ENCODE measurements at regions of chr9 and their contacts with region 1.

Region 1: GRCh38 chr9:128103589-128103962 is 24.0 kb downstream of the PTGES2 start:
- DNase-seq: no peak
- H3K4me3 ChIP-seq: no peak overlapping the region
- CTCF ChIP-seq: no peak

Region 2: GRCh38 chr9:128127990-128128835 is 24.6 kb after region 1 on chr9:
- CTCF ChIA-PET with region 1: interaction called, 11 read pairs
- POLR2A ChIA-PET with region 1: interaction called, 3 read pairs
- DNase-seq: peak; percentile 42
- H3K4me3 ChIP-seq: peak overlapping the region; percentile 95
- CTCF ChIP-seq: no peak